CD4-positive, alpha-beta memory T cell (primary cell): ENCODE measurements at regions of chr17 and their contacts with region 1.

Region 1: DNA sequence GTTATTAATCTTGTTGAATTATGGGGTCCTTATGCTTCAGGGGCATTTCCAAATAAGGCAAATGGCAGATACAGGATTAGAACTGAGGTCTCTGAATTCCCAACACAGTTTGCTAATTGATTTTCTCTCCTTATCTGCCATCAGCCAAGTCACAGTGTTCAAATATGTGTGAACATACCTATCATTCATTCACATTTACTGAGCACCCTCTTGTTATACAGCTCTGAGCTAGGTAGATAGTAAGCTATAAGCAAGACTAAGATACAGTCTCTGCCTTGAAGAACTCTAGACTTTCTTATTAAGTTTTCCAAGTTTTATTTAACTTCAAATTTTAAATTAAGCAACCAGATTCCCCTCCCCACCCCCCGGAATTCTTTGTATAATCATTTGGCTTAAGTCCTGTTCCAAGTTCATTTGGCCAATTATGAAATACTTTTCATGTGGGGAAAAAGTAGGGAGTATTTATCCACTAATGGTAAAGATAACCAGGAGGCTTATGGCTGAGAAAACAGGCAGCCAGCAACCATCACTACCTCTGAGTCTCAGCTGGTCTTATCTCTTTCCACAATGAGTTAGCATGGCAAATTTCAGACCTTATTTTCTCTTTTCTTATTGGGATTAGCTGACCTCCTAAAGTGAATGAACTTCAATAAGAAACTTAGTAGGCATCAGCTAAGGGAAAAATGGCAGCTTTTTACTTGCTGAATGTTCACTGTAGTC is 31.4 kb upstream of the CORO6 start:
- DNase-seq: no peak
- H3K4me3 ChIP-seq: no peak overlapping the region
- H3K4me3 Mint-ChIP-seq: no peak overlapping the region
- H3K27ac ChIP-seq: no peak overlapping the region
- H3K27ac Mint-ChIP-seq: peak overlapping the region in 3 of 7 donors; percentile 15 to 68 (median 37)
- H3K4me1 ChIP-seq: peaks cover 2% of the 10 kb centered on the region
- H3K4me1 Mint-ChIP-seq: peaks cover 0 to 4% (median 2%) of the 10 kb centered on the region in 4 donors
- H3K27me3 ChIP-seq: no peaks in the 10 kb centered on the region
- H3K27me3 Mint-ChIP-seq: no peaks in the 10 kb centered on the region

Region 2: DNA sequence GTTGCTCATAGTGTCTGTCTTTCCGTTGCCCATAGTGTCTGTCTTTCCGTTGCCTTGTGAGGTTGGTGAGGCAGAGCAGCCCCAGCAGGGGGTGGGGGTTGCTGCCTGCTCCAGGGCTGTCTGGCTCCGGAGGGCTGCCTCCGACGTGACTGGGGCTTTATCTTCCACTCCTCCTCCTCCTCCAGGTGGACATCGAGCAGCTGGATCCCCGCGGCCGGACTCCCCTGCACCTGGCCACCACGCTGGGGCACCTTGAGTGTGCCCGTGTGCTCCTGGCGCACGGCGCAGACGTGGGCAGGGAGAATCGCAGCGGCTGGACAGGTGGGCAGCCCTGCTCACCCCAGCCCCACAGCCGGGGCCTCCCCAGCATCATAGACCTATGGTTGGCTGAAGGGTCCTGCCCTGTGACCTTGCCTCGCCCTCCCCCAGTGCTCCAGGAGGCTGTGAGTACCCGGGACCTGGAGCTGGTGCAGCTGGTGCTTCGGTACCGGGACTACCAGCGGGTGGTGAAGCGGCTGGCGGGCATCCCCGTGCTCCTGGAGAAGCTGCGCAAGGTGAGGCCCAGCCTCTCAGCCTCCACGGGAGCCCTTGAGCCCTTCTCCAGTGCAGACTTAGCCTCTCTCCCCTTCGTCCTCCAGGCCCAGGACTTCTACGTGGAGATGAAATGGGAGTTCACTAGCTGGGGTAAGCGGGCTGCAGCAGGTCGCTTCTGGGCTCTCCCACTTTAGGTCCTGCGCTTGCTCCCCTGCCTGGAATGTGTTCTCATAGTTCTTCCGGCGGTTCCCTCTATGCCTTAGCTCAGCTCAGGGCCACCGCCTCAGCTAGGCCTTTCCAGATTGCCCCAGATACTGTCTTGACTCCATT is 46.4 kb before region 1 on chr17:
- CTCF ChIA-PET with region 1: no interaction called
- POLR2A ChIA-PET with region 1: no interaction called
- intact Hi-C with region 1: no loop called
- DNase-seq: no peak
- H3K4me3 ChIP-seq: no peak overlapping the region
- H3K4me3 Mint-ChIP-seq: no peak overlapping the region
- H3K27ac ChIP-seq: no peak overlapping the region
- H3K27ac Mint-ChIP-seq: no peak overlapping the region
- H3K4me1 ChIP-seq: peaks cover under 1% of the 10 kb centered on the region
- H3K4me1 Mint-ChIP-seq: peaks cover 0 to 2% (median 0%) of the 10 kb centered on the region in 4 donors
- H3K27me3 ChIP-seq: no peaks in the 10 kb centered on the region
- H3K27me3 Mint-ChIP-seq: no peaks in the 10 kb centered on the region

Region 3: DNA sequence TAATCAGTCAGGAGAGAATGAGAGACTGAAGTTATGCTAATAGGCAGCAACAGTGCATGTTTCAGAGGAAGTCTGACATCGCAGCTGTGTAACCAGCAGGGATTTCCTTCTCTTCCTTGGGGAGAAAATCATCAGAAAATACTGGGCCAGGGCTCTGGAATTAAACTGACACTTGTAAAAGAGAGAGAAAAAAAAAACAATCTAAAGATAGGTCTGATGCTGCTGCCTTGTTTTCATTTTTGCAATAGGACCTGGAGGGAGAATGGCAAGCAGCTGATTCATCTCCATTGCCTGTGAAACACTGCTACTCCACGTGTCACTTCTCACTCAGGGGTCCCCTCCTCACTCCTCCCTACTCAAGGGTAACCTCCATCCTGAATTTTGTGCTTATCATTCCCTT is 13.7 kb before region 1 on chr17:
- CTCF ChIA-PET with region 1: interaction called, 10 read pairs
- POLR2A ChIA-PET with region 1: interaction called, 4 read pairs
- intact Hi-C with region 1: no loop called
- DNase-seq: no peak
- H3K4me3 ChIP-seq: no peak overlapping the region
- H3K4me3 Mint-ChIP-seq: no peak overlapping the region
- H3K27ac ChIP-seq: no peak overlapping the region
- H3K27ac Mint-ChIP-seq: peak overlapping the region in 5 of 7 donors; percentile 60 to 96 (median 75)
- H3K4me1 ChIP-seq: no peaks in the 10 kb centered on the region
- H3K4me1 Mint-ChIP-seq: peaks cover 7 to 19% (median 13%) of the 10 kb centered on the region in 4 donors
- H3K27me3 ChIP-seq: no peaks in the 10 kb centered on the region
- H3K27me3 Mint-ChIP-seq: no peaks in the 10 kb centered on the region

Region 4: DNA sequence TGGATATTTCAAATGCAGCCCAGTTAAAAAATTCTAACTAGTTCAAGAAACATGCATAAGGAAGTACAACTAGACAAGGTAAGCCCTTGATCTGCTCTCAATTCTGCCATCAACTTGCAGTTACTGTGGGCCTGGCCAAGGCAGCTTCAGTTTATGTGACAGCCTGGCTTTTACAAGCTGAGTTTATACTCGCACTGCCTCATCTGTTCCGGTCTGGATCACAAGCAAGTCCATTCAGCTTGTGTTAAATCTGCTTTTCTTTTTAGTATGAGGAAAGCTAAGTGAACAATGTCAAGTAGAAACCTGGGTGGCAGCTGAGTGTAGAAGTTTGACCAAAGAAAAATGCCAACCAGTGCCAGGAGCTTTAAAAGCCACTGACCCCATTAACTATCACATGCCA is 45.1 kb after region 1 on chr17:
- CTCF ChIA-PET with region 1: no interaction called
- POLR2A ChIA-PET with region 1: no interaction called
- intact Hi-C with region 1: no loop called
- DNase-seq: no peak
- H3K4me3 ChIP-seq: no peak overlapping the region
- H3K4me3 Mint-ChIP-seq: no peak overlapping the region
- H3K27ac ChIP-seq: no peak overlapping the region
- H3K27ac Mint-ChIP-seq: peak overlapping the region in 5 of 7 donors; percentile 47 to 80 (median 69)
- H3K4me1 ChIP-seq: peaks cover 7% of the 10 kb centered on the region
- H3K4me1 Mint-ChIP-seq: peaks cover 9 to 19% (median 14%) of the 10 kb centered on the region in 4 donors
- H3K27me3 ChIP-seq: no peaks in the 10 kb centered on the region
- H3K27me3 Mint-ChIP-seq: no peaks in the 10 kb centered on the region